Naive thymus-derived CD4-positive, alpha-beta T cell (primary cell): ENCODE measurements at regions of chr10 and their contacts with region 1.

Region 1: GRCh38 chr10:102853944-102854694 is at the start of gene BORCS7:
- DNase-seq: peak; percentile 69 to 91 (median 88)
- ATAC-seq: peak; percentile 100
- H3K4me3 ChIP-seq: peak within 1 kb of the TSS; percentile 100
- H3K4me3 Mint-ChIP-seq: peak within 1 kb of the TSS; percentile 84 to 99 (median 91)
- H3K27ac ChIP-seq: peak within 1 kb of the TSS; percentile 95
- H3K27ac Mint-ChIP-seq: peak within 1 kb of the TSS; percentile 96 to 99 (median 99)
- H3K4me1 ChIP-seq: no peaks in the 10 kb centered on the region
- H3K4me1 Mint-ChIP-seq: peaks cover 7 to 25% (median 15%) of the 10 kb centered on the region in 7 donors
- H3K27me3 ChIP-seq: no peaks in the 10 kb centered on the region
- H3K27me3 Mint-ChIP-seq: no peaks in the 10 kb centered on the region
- total RNA-seq, gene BORCS7: 11.6 to 20.2 (median 13.3) TPM

Region 2: DNA sequence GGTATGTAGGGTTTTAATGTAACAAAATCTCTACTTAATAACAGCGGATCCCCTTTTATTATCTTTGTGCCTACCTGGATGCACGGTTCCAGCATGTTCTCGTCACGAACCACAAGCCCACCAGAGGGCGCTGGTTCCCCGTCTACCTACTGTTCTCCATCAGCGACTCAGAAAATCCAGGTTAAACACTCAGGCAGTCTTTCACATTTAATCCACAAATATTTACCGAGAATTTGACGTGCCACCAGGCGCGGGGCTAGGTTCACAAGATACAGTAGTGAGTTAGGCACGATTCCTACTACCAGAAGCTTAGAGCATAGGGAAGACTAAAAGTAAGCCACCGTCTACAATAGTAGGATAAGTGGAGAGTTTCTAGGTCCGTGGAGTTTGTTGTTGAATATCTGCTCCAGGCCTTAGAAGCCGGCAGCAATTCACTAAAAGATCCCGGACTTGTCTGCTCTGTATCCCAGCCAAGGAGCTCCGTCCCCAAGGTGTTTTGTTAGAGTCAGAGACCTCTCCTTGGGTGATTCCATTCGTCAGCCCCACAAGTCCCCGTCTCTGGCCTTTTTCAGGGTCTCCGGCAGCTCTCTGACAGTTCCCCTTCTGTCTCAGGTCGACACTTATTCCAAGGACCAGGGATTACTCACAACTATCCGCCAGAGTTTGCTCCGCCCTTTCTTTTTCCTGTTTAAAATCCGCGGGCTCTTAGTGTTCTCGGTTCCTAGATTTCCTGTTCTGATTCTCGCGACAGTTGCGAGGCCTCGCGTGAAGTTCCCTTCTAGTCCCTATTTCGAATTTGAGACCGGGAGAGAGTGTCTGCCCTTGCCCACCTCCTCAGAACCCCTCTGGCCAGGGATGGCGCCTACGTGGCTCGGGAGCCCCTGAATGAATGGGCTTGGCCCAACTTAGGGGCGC is 1793.8 kb before region 1 on chr10:
- CTCF ChIA-PET with region 1: no interaction called
- POLR2A ChIA-PET with region 1: no interaction called
- intact Hi-C with region 1: loop called in 1 of 2 experiments (anchors 5 kb)
- DNase-seq: peak; percentile 70 to 97 (median 94)
- ATAC-seq: peak; percentile 82
- H3K4me3 ChIP-seq: peak overlapping the region; percentile 96
- H3K4me3 Mint-ChIP-seq: peak overlapping the region; percentile 90 to 99 (median 96)
- H3K27ac ChIP-seq: peak overlapping the region; percentile 96
- H3K27ac Mint-ChIP-seq: peak overlapping the region; percentile 86 to 98 (median 93)
- H3K4me1 ChIP-seq: peaks cover 12 to 21% of the 10 kb centered on the region in 2 donors
- H3K4me1 Mint-ChIP-seq: peaks cover 16 to 61% (median 31%) of the 10 kb centered on the region in 7 donors
- H3K27me3 ChIP-seq: peaks cover 5 to 18% of the 10 kb centered on the region in 2 donors
- H3K27me3 Mint-ChIP-seq: peaks cover 15 to 23% (median 18%) of the 10 kb centered on the region in 5 donors

Region 3: DNA sequence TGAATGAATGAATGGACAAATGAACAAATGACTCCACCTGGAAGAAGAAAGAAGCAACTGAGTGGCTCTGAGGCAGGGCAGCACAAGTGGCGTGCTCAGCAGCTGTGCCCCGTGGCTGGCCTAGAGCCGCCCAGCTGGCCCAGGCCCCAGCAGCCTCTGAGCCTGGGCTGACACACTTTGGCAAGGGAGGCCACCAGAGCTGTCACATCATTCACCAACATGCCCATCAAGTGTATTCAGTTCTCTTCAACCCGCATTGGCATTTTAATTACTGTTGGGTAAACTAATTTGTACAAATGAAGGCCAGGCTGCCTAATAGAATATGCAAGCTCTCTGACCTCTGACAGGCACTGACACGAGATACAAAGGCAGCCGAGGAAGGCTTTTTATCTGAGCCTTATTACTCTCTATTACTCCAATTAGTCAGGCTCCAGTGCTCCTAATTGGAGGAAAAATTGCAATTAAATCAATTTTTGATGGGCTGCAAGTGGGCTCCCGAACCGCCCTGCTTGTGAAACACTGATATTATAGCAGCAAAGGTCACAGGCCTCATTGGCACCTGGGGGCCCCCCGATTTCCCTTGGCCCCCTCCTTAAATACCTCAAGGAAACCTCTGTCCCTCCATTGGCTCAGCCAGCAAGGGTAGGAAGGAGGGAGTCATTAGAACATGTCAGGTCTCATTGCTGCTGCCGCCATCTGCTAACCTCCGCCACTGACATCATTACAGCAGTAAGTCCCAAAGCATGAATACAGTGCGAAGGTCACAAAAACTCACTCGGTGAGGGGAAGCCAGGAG is 1224.1 kb before region 1 on chr10:
- CTCF ChIA-PET with region 1: no interaction called
- POLR2A ChIA-PET with region 1: no interaction called
- intact Hi-C with region 1: no loop called
- DNase-seq: no peak
- ATAC-seq: no peak
- H3K4me3 ChIP-seq: no peak overlapping the region
- H3K4me3 Mint-ChIP-seq: peak overlapping the region in 1 of 10 donors; percentile 45
- H3K27ac ChIP-seq: no peak overlapping the region
- H3K27ac Mint-ChIP-seq: peak overlapping the region in 4 of 9 donors; percentile 6 to 57 (median 11)
- H3K4me1 ChIP-seq: no peaks in the 10 kb centered on the region
- H3K4me1 Mint-ChIP-seq: peaks cover 0 to 57% (median 31%) of the 10 kb centered on the region in 7 donors
- H3K27me3 ChIP-seq: no peaks in the 10 kb centered on the region
- H3K27me3 Mint-ChIP-seq: no peaks in the 10 kb centered on the region

Region 4: DNA sequence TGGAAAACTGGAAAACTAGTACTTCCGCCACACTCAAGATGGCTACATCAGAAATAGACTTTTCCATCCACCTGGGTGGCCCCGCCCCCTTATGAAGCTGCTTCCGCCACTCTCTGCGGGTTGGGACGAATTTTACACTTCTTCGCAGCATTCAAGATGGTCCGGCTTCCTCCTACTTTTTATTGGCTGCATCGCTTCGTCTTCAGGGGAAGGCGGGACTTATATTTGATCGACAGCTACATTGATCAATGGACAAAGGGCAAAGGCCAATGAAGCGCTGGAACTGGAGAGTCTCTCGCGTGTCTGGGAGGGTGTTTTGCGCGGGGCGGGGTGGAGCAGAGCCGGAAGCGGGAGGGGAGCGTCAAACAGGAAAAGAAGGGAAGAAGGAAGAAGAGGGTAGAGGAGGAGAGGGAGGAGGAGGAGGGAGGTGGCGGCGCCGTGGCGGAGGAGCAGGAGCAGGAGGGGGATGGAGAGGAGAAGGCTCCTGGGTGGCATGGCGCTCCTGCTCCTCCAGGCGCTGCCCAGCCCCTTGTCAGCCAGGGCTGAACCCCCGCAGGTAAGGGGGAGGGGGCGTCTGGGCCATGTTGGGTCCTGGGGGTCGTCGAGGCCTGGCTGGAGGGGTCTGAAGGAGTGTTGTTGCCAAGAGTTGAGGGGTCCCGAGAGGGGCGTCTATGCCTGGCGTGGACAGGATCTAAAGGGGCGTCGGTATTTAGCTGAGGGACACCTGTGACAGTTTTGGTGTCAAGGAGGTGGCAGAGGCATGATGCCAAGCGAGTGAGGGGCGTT is 110.3 kb before region 1 on chr10 and contains the start of gene WBP1L:
- CTCF ChIA-PET with region 1: no interaction called
- POLR2A ChIA-PET with region 1: interaction called, 3 read pairs
- intact Hi-C with region 1: loop called (anchors 1 kb)
- DNase-seq: peak; percentile 77 to 98 (median 96)
- ATAC-seq: peak; percentile 98
- H3K4me3 ChIP-seq: peak within 1 kb of the TSS; percentile 85
- H3K4me3 Mint-ChIP-seq: peak within 1 kb of the TSS; percentile 80 to 97 (median 93)
- H3K27ac ChIP-seq: peak within 1 kb of the TSS; percentile 77
- H3K27ac Mint-ChIP-seq: peak within 1 kb of the TSS; percentile 57 to 96 (median 90)
- H3K4me1 ChIP-seq: peaks cover 17 to 25% of the 10 kb centered on the region in 2 donors
- H3K4me1 Mint-ChIP-seq: peaks cover 33 to 59% (median 48%) of the 10 kb centered on the region in 7 donors
- H3K27me3 ChIP-seq: no peaks in the 10 kb centered on the region
- H3K27me3 Mint-ChIP-seq: no peaks in the 10 kb centered on the region
- total RNA-seq, gene WBP1L: 20.5 to 37.9 (median 34.1) TPM

Region 5: DNA sequence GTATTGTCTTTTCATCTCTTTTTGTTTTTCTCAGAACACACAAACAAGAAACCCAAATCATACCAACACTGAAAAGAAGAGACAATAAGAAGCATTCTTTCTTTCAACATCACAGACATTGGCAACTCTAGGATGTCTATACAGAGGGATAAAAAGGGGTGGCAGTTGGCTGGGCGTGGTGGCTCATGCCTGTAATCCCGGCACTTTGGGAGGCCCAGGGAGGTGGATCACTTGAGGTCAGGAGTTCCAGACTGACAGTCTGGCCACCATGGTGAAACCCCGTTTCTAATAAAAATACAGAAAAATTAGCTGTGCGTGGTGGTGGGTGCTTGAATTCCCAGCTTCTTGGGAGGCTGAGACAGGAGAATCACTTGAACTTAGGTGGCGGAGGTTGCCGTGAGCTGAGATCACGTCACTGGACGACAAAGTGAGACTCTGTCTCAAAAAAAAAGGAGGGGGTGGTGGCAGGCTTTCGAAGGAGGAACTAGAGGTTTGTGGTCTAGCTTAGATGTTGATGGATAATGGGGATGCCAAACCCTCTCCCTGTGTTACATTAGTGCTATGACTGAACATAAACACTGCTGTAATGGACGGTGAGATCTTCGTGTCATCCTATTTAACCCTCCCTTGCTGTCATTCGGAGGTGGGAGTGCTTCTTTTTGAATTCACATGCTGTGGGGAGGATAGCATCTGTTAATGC is 73.3 kb after region 1 on chr10:
- CTCF ChIA-PET with region 1: no interaction called
- POLR2A ChIA-PET with region 1: no interaction called
- intact Hi-C with region 1: no loop called
- DNase-seq: no peak
- ATAC-seq: peak; percentile 81
- H3K4me3 ChIP-seq: no peak overlapping the region
- H3K4me3 Mint-ChIP-seq: peak overlapping the region in 2 of 10 donors; percentile 2 to 6
- H3K27ac ChIP-seq: no peak overlapping the region
- H3K27ac Mint-ChIP-seq: peak overlapping the region in 1 of 9 donors; percentile 62
- H3K4me1 ChIP-seq: peaks cover 3 to 6% of the 10 kb centered on the region in 2 donors
- H3K4me1 Mint-ChIP-seq: peaks cover 18 to 43% (median 22%) of the 10 kb centered on the region in 7 donors
- H3K27me3 ChIP-seq: no peaks in the 10 kb centered on the region
- H3K27me3 Mint-ChIP-seq: no peaks in the 10 kb centered on the region

Region 6: GRCh38 chr10:103062604-103063590 is 208.8 kb after region 1 on chr10:
- CTCF ChIA-PET with region 1: no interaction called
- POLR2A ChIA-PET with region 1: no interaction called
- intact Hi-C with region 1: no loop called
- DNase-seq: no peak
- ATAC-seq: no peak
- H3K4me3 ChIP-seq: no peak overlapping the region
- H3K4me3 Mint-ChIP-seq: no peak overlapping the region
- H3K27ac ChIP-seq: no peak overlapping the region
- H3K27ac Mint-ChIP-seq: peak overlapping the region in 1 of 9 donors; percentile 6
- H3K4me1 ChIP-seq: no peaks in the 10 kb centered on the region
- H3K4me1 Mint-ChIP-seq: peaks cover 0 to 7% (median 0%) of the 10 kb centered on the region in 7 donors
- H3K27me3 ChIP-seq: no peaks in the 10 kb centered on the region
- H3K27me3 Mint-ChIP-seq: no peaks in the 10 kb centered on the region

Region 7: DNA sequence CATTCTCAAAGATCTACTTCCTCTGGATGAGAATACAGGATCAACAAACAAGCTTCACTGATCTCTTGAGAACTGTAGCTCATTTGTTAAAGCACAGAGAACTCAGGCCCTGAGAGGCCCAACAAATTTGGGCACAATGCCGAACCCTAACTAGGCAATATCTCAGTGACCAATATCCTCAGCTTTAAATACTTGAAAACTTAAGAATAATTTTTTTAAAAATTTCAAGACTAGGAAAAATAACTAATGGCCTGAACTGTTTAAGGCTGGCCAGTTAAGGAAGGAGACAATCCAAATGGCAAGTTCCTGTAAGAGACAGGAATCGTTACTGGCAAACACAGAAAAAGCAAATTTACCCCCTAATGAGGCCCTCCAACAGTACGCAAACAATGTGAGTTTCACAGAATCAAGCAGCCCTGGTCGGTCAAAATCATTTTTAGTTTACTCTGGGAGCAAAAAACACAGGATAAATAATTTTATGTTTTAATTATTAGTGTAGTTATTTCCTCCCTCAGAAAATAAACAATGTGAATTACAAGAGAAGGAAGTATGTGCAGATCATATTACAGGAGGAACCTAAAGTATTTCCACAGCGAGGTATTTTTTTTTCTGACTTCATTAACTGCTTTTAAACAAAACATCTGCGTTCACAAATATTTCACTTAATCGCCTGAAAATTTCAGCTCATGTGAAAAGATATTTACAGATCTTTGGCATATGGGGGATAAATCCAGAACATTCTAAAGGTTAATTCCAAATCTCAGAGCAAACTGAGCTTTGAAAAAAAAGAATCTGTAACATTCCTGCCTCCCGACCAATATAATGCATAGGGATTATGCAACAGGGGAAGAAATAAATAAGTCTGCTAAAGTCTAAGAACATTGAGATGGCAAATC is 299.4 kb after region 1 on chr10:
- CTCF ChIA-PET with region 1: no interaction called
- POLR2A ChIA-PET with region 1: no interaction called
- intact Hi-C with region 1: no loop called
- DNase-seq: no peak
- ATAC-seq: no peak
- H3K4me3 ChIP-seq: no peak overlapping the region
- H3K4me3 Mint-ChIP-seq: no peak overlapping the region
- H3K27ac ChIP-seq: no peak overlapping the region
- H3K27ac Mint-ChIP-seq: no peak overlapping the region
- H3K4me1 ChIP-seq: no peaks in the 10 kb centered on the region
- H3K4me1 Mint-ChIP-seq: peaks cover 0 to 22% (median 5%) of the 10 kb centered on the region in 7 donors
- H3K27me3 ChIP-seq: no peaks in the 10 kb centered on the region
- H3K27me3 Mint-ChIP-seq: no peaks in the 10 kb centered on the region

Region 8: DNA sequence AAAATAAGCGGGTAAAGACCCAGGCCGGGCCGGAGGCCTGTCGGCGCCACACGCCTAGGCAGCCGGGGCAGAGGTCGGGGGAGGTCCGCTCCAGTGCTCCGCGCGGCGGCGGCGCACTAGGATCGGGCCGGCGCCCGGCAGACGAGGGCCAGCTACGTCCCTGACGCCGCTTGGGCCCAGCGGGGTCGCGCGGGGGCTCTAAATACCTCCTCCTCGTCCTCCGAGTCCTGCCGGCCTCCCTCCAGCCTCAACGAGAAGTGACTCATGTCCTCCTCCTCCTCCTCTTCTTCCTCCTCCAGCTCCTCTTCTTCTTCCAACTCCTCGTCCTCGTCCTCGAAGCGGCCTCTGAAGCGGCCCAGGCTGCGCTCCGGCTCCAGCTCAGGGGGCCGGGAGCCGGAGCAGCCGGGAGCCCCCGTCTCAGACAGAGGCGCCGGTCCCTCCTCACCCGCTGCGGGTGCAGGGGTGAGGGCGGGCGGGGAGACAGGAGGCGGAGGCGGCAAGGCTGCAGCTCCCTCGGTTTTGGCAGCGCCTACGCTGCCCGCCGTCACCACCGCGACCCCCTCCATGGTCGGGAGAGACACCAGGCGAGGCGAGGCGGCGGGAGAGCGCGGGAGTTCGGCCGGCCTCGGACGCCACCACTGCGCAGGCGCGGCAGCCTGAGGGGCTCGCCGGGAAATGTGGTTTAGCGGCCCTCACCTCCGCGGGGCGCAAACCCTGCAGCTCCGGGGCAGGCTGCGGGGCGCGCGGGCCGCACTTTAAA is 496.6 kb after region 1 on chr10 and contains the start of gene PCGF6:
- CTCF ChIA-PET with region 1: no interaction called
- POLR2A ChIA-PET with region 1: no interaction called
- intact Hi-C with region 1: loop called in 1 of 2 experiments (anchors 1 kb)
- DNase-seq: peak; percentile 42 to 85 (median 70)
- ATAC-seq: peak; percentile 88
- H3K4me3 ChIP-seq: peak within 1 kb of the TSS; percentile 79
- H3K4me3 Mint-ChIP-seq: peak within 1 kb of the TSS; percentile 83 to 95 (median 91)
- H3K27ac ChIP-seq: peak within 1 kb of the TSS; percentile 80
- H3K27ac Mint-ChIP-seq: peak within 1 kb of the TSS; percentile 69 to 94 (median 86)
- H3K4me1 ChIP-seq: peaks cover 6 to 11% of the 10 kb centered on the region in 2 donors
- H3K4me1 Mint-ChIP-seq: peaks cover 0 to 14% (median 9%) of the 10 kb centered on the region in 7 donors
- H3K27me3 ChIP-seq: no peaks in the 10 kb centered on the region
- H3K27me3 Mint-ChIP-seq: no peaks in the 10 kb centered on the region
- total RNA-seq, gene PCGF6: 4.3 to 12.0 (median 6.6) TPM

Region 9: GRCh38 chr10:103396064-103396788 is 542.1 kb after region 1 on chr10 and contains the starts of genes ATP5MK and PDCD11:
- CTCF ChIA-PET with region 1: no interaction called
- POLR2A ChIA-PET with region 1: no interaction called
- intact Hi-C with region 1: loop called in 1 of 2 experiments (anchors 1 kb)
- DNase-seq: peak; percentile 75 to 93 (median 91)
- ATAC-seq: peak; percentile 100
- H3K4me3 ChIP-seq: peak within 1 kb of the TSS; percentile 91
- H3K4me3 Mint-ChIP-seq: peak within 1 kb of the TSS; percentile 91 to 99 (median 99)
- H3K27ac ChIP-seq: peak within 1 kb of the TSS; percentile 87
- H3K27ac Mint-ChIP-seq: peak within 1 kb of the TSS; percentile 89 to 97 (median 96)
- H3K4me1 ChIP-seq: peaks cover 25 to 33% of the 10 kb centered on the region in 2 donors
- H3K4me1 Mint-ChIP-seq: peaks cover 42 to 68% (median 62%) of the 10 kb centered on the region in 7 donors
- H3K27me3 ChIP-seq: no peaks in the 10 kb centered on the region
- H3K27me3 Mint-ChIP-seq: no peaks in the 10 kb centered on the region
- total RNA-seq, gene ATP5MK: 106 to 334 (median 120) TPM
- total RNA-seq, gene PDCD11: 28.8 to 56.3 (median 38.8) TPM

Region 10: DNA sequence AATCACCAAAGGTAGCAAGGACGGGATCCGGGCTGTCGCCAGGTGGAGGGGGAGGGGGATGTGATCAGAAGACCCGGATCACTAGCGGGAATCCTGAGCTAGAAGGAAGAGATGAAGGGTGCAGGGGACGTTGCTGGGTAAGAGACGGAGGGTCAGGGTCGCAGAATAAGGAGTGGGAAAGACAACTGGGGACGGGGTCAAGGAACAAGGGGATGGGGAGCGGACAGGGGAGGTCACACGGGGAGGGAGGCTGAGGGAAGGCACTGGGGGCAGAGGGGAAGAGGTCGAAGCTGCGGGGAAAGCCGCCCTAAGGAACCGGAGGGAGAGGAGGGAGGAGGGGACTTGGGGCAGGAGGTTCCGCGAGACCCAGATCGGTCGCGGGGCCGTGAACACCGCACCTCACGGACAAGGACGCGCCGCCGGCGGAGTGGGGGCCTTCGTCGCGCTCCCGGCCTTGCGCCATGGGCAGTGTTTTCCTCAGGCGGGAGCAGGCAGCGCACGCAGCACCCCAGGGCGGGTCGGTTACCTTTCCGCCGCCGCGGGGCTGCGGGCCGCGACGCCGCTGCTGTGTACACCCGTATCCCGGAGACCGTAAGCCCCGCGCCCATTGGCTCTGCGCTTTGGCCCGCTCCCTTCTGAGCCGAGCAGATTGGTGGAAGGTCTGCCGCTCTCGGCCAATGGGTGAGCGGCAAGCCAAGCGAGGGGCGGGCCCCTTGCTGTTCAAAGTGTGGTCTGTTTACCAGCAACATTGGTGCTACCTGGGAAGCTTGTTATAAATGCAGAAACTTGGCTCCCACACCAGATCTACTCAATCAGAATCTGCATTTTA is 1377.9 kb after region 1 on chr10 and contains the start of gene CFAP43:
- CTCF ChIA-PET with region 1: no interaction called
- POLR2A ChIA-PET with region 1: no interaction called
- intact Hi-C with region 1: loop called in 1 of 2 experiments (anchors 5 kb)
- DNase-seq: peak; percentile 99 to 100 (median 99)
- ATAC-seq: peak; percentile 100
- H3K4me3 ChIP-seq: peak within 1 kb of the TSS; percentile 74
- H3K4me3 Mint-ChIP-seq: peak within 1 kb of the TSS; percentile 84 to 95 (median 91)
- H3K27ac ChIP-seq: peak within 1 kb of the TSS; percentile 44
- H3K27ac Mint-ChIP-seq: peak within 1 kb of the TSS; percentile 63 to 95 (median 86)
- H3K4me1 ChIP-seq: peaks cover 0 to 6% of the 10 kb centered on the region in 2 donors
- H3K4me1 Mint-ChIP-seq: peaks cover 6 to 18% (median 13%) of the 10 kb centered on the region in 7 donors
- H3K27me3 ChIP-seq: peaks cover 0 to 7% of the 10 kb centered on the region in 2 donors
- H3K27me3 Mint-ChIP-seq: peaks cover 10 to 58% (median 19%) of the 10 kb centered on the region in 5 donors
- total RNA-seq, gene CFAP43: 0.17 TPM in 1 of 5 experiments, not detected in the others